Activated B cell treated with CpG ODN at 0.5 μM for 24 hours (primary cell): ENCODE measurements at regions of chr17 and their contacts with region 1.

Region 1: GRCh38 chr17:45307290-45308015 is 9.4 kb downstream of the MAP3K14 start:
- DNase-seq: peak; percentile 42
- ATAC-seq: peak; percentile 69
- H3K4me3 Mint-ChIP-seq: peak overlapping the region; percentile 81
- H3K27ac Mint-ChIP-seq: peak overlapping the region; percentile 100
- H3K4me1 Mint-ChIP-seq: peaks cover 93% of the 10 kb centered on the region
- H3K27me3 Mint-ChIP-seq: no peaks in the 10 kb centered on the region
- CTCF ChIP-seq: no peak

Region 2: DNA sequence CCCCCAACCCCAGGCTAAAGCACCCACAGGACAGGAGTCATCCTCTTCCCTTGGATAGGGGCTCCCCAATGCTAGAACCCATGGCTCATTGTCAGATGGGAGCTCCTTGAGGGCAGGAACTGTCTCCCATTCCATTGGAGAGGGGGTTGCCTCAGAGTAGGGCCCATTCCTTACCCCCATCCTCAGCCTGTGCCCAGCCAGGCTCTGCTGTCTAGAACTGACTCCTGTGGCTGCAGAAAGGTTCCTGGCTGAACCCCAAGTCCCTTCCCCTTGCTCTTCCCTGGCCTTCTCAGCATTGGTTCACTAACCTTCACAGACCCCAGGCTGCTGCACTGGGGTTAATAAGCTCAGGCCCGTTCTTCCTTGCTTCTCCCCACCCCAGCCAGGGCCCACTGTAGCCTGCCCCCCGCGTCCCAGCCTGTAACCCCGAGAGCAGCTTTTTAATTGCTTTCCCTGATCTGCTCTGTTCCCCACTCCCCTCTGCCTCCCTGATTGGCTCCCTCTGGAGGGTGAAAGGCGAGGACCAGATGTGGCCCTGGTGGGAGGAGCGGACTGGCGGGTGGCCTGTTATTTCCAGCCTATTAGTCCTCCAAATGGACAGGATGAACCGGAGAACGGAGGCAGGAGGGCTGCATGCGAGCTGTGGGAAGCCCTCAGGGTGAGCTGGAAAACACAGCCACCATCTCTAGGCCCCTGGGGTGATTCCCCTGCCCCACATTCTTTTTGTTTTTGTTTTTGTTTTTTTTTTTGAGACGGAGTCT is 386.2 kb before region 1 on chr17:
- CTCF ChIA-PET with region 1: no interaction called
- POLR2A ChIA-PET with region 1: no interaction called
- intact Hi-C with region 1: no loop called
- DNase-seq: no peak
- ATAC-seq: no peak
- H3K4me3 Mint-ChIP-seq: no peak overlapping the region
- H3K27ac Mint-ChIP-seq: no peak overlapping the region
- H3K4me1 Mint-ChIP-seq: peaks cover 15% of the 10 kb centered on the region
- H3K27me3 Mint-ChIP-seq: peaks cover 12% of the 10 kb centered on the region
- CTCF ChIP-seq: no peak

Region 3: DNA sequence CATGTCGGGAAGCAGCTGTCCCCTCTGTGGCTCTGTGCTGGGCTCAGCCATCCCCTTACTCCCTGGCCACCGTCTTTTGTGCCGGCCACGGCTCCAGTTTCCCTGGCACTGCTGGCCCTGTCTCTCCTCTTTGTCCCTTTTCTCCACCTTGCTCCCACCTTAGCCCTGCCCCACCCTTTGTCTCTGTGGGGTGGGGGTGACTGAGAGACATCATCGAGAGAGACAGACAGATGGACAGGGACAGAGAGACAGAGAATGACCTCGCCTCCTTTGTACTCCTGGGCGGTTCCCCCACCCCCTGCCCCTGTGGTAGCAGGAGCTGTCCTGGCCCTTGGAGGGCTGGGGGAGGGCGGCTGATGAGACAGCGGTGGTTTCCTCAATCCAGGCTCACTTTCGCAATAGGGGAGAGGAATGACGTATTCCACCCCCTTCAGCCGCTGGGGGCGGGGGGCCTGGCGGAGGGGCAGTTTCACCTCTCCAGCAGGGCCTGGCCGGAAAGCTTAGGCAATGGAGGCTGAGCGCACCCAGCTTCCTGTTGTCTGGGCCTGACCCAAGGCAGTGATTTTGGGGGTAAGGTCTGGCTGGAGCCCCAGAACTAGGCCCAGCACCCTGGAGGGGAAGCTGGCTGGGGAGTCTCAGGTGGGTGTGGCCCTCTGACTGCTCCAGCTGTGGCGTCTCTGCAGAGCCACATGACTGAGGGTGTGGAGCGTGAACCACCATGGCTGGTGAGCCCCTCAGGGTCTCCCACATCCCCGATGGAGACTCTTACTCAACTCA is 78.5 kb before region 1 on chr17:
- CTCF ChIA-PET with region 1: interaction called, 8 read pairs
- POLR2A ChIA-PET with region 1: interaction called, 154 read pairs
- intact Hi-C with region 1: no loop called
- DNase-seq: peak; percentile 84
- ATAC-seq: peak; percentile 45
- H3K4me3 Mint-ChIP-seq: peak overlapping the region; percentile 79
- H3K27ac Mint-ChIP-seq: peak overlapping the region; percentile 99
- H3K4me1 Mint-ChIP-seq: peaks cover 97% of the 10 kb centered on the region
- H3K27me3 Mint-ChIP-seq: no peaks in the 10 kb centered on the region
- CTCF ChIP-seq: no peak

Region 4: GRCh38 chr17:45284176-45285140 is 23.0 kb before region 1 on chr17:
- CTCF ChIA-PET with region 1: interaction called, 8 read pairs
- POLR2A ChIA-PET with region 1: interaction called, 291 read pairs
- intact Hi-C with region 1: no loop called
- DNase-seq: no peak
- ATAC-seq: peak; percentile 75
- H3K4me3 Mint-ChIP-seq: no peak overlapping the region
- H3K27ac Mint-ChIP-seq: peak overlapping the region; percentile 19
- H3K4me1 Mint-ChIP-seq: peaks cover 4% of the 10 kb centered on the region
- H3K27me3 Mint-ChIP-seq: no peaks in the 10 kb centered on the region
- CTCF ChIP-seq: no peak

Region 5: GRCh38 chr17:45332989-45333701 is 25.7 kb after region 1 on chr17:
- CTCF ChIA-PET with region 1: no interaction called
- POLR2A ChIA-PET with region 1: interaction called, 12 read pairs
- intact Hi-C with region 1: no loop called
- DNase-seq: no peak
- ATAC-seq: peak; percentile 77
- H3K4me3 Mint-ChIP-seq: peak overlapping the region; percentile 46
- H3K27ac Mint-ChIP-seq: peak overlapping the region; percentile 69
- H3K4me1 Mint-ChIP-seq: peaks cover 43% of the 10 kb centered on the region
- H3K27me3 Mint-ChIP-seq: no peaks in the 10 kb centered on the region
- CTCF ChIP-seq: no peak

Region 6: GRCh38 chr17:45385331-45385997 is 78.0 kb after region 1 on chr17:
- CTCF ChIA-PET with region 1: interaction called, 8 read pairs
- POLR2A ChIA-PET with region 1: interaction called, 5 read pairs
- intact Hi-C with region 1: loop called (anchors 1 kb)
- DNase-seq: peak; percentile 84
- ATAC-seq: peak; percentile 94
- H3K4me3 Mint-ChIP-seq: no peak overlapping the region
- H3K27ac Mint-ChIP-seq: no peak overlapping the region
- H3K4me1 Mint-ChIP-seq: peaks cover 7% of the 10 kb centered on the region
- H3K27me3 Mint-ChIP-seq: peaks cover 8% of the 10 kb centered on the region
- CTCF ChIP-seq: peak; percentile 35